Colonic mucosa (tissue), 4 donors: ENCODE measurements at regions of chr10 and their contacts with region 1.

Region 1: GRCh38 chr10:5283305-5284158 is 81.2 kb upstream of the UCN3 start:
- DNase-seq: peak; percentile 72
- H3K4me3 ChIP-seq: no peak overlapping the region
- H3K27ac ChIP-seq: no peak overlapping the region
- H3K4me1 ChIP-seq: no peaks in the 10 kb centered on the region
- H3K27me3 ChIP-seq: no peaks in the 10 kb centered on the region
- CTCF ChIP-seq: peak; percentile 76

Region 2: DNA sequence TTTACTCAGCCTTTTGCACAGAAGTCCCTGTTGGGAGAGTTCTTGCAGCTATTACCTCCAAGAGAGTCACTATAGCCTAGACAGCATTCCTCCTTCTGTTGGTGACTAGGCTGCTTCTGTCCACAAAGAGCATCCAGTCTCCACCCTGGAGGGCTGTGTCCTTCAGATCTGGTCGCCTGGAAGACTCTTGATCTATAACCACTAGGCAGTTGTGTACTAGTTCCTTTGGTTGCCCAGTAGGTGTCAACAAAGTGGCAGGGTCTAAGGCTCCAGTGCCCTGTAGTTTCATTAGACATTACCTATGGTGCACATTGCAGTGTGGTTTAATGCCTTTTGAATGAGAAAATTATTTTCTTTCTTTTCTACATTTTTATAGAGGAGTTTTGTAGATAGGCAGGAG is 268.6 kb before region 1 on chr10:
- intact Hi-C with region 1: loop called (anchors 5 kb)
- DNase-seq: no peak
- H3K4me3 ChIP-seq: no peak overlapping the region
- H3K27ac ChIP-seq: no peak overlapping the region
- H3K4me1 ChIP-seq: no peaks in the 10 kb centered on the region
- H3K27me3 ChIP-seq: no peaks in the 10 kb centered on the region
- CTCF ChIP-seq: no peak

Region 3: DNA sequence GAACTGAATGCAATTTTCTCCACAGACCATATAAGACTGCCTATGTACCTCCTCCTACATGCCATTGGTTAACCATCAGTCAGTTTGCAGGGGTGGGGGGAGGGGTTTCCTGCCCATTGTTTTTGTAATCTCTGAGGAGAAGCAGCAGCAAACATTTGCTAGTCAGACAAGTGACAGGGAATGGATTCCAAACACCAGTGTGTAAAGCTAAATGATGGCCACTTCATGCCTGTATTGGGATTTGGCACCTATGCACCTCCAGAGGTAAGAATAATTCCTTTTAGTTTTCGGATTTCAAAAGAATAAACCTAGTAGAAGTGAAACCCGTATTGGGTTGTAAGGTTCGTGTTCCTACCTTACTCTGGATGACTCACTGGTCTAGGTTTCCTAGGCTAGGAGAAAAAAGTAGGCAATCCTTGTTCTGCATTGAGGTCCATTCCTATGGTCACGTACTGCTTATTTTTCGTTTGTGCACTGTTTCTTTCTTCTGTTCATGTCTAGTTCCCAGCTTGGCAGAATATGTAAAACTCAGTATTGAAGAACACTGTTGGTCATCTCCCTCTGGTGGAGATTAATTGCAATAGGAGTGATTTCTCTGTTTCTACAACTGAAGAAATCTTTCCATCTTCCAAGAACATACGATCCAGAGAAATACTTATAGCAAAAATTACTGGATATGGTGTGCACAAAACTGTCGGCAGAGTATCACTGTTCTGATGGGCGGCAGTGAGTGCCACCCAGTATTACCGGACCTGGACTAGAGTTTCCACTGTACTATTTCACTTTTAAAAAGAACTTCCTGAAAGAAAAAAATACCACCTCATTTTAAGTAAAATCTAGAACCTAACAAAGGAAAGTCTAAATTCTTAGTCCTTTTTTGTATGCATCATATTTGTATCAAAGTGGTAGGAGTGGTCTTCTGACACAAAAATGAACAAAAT is 189.0 kb before region 1 on chr10 and contains the start of gene AKR1C3:
- intact Hi-C with region 1: loop called (anchors 10 kb)
- DNase-seq: peak; percentile 30
- H3K4me3 ChIP-seq: peak within 1 kb of the TSS; percentile 49
- H3K27ac ChIP-seq: peak within 1 kb of the TSS; percentile 71
- H3K4me1 ChIP-seq: no peaks in the 10 kb centered on the region
- H3K27me3 ChIP-seq: no peaks in the 10 kb centered on the region
- CTCF ChIP-seq: peak; percentile 48
- total RNA-seq, gene AKR1C3: 75.6 to 257 TPM

Region 4: DNA sequence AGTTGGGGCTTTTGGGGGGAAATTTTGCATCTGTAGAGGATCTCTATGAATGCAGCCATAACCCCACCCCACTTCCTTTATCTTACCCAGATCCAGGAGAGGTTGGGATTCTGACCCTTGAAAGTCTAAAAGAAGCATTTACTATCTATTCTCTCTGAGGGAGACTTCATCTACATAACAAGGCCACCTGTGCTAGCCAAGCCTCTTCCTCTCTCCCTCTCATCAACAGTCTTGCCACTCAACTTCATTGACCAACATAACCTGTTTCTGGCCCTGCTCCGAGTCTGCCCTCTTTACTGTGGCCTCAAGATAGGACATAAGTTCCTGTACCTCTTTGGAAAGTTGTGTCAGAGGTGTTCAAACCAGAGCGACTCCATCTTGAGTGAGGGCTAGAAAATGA is 101.7 kb after region 1 on chr10:
- intact Hi-C with region 1: loop called (anchors 10 kb)
- DNase-seq: no peak
- H3K4me3 ChIP-seq: no peak overlapping the region
- H3K27ac ChIP-seq: no peak overlapping the region
- H3K4me1 ChIP-seq: no peaks in the 10 kb centered on the region
- H3K27me3 ChIP-seq: no peaks in the 10 kb centered on the region
- CTCF ChIP-seq: no peak

Region 5: GRCh38 chr10:5416981-5417380 is 133.4 kb after region 1 on chr10:
- intact Hi-C with region 1: no loop called
- DNase-seq: no peak
- H3K4me3 ChIP-seq: no peak overlapping the region
- H3K27ac ChIP-seq: no peak overlapping the region
- H3K4me1 ChIP-seq: no peaks in the 10 kb centered on the region
- H3K27me3 ChIP-seq: no peaks in the 10 kb centered on the region
- CTCF ChIP-seq: no peak